ENCODE measurements at regions of chr20 and their contacts with region 1.

Region 1: DNA sequence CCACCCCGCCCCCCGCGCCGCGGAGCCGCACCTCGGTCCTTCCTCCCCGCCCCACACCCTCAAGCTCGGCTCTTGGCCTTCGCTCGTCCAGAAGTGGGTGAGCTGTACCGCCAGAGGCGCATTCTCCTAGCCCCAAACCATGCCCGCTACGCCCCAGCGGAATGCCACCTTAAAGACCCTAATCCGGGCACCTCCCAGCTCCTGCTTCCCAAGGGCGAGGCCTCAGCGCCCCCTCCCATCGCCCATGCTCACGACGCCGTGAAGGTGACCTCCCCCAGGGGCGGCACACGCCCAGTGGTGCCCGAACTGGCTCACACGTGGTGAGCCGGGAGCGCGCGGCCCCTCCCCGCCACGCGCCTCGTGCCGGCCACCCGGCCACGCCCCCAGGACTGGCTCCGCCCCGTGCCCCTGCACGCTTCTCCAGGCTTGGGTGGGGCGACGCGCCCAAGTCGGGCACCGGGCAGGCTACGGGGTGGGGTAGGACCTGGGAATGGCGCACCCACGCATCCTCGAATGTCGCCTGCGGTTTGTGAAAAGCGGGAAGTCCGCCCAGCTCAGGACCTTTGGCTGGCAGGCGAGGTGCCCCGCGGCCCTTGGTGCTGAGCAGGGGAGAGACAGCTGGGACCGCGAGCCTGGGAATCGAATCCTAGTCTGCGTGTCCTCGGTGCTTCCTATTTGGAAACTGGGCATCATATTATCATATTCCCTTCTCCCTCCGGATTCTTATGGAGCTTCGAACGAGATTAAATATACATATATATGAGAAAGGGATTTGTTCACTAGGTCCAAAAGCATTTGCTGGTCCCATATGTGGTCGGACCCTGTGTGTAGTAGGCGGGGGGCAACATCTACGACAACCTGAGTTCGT is 941 bp upstream of the SOX12 start:
- DNase-seq: peak; percentile 95
- ATAC-seq: peak; percentile 57
- H3K4me3 ChIP-seq: peak overlapping the region; percentile 58 to 95 (median 79)
- H3K4me3 Mint-ChIP-seq: peak overlapping the region; percentile 95
- H3K27ac ChIP-seq: peak overlapping the region; percentile 65 to 89
- H3K27ac Mint-ChIP-seq: peak overlapping the region; percentile 95
- H3K4me1 ChIP-seq: peaks cover 15 to 29% of the 10 kb centered on the region in 2 donors
- H3K4me1 Mint-ChIP-seq: peaks cover 26% of the 10 kb centered on the region
- H3K27me3 ChIP-seq: no peaks in the 10 kb centered on the region
- H3K27me3 Mint-ChIP-seq: no peaks in the 10 kb centered on the region
- CTCF ChIP-seq: peak; percentile 56

Region 2: DNA sequence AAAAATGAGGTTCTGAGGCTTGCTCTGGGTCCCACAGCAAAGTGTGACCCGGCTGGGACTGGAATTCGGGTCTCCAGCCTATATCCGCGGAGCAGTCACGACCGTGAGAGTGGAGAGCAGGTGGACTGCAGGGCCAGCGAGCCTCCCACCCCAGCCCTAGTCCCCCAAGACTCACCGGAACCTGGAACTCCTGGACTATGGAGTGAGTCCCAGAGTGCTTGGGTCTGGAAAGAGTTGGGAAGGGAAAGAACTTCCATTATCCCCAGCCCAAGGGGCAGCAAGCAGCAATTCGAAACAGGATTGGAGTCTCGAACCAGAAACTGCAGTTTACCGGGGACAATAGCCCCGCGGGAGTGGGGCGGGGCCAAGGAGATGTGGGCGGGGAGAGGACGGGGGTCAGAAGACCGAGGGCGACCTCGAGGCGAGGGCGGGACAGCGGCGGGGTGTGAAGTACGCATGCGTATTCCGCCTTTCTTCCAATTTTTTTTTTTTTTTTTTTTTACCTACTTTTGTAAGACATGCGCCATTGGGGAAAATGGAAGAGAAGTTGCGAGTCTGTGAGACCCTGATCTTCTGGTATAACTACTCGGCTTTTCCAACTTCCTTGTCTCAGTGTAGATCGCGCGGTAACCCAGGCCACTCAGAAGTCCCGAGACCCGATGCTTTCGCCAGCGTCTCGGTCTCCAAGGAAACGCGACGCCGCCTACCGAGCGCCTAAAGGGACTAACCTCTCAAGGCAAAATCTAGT is 34.2 kb before region 1 on chr20 and contains the start of gene C20orf96:
- CTCF ChIA-PET with region 1: interaction called, 20 read pairs
- POLR2A ChIA-PET with region 1: interaction called, 3 read pairs
- intact Hi-C with region 1: loop called (anchors 1 kb)
- DNase-seq: peak; percentile 93
- ATAC-seq: peak; percentile 98
- H3K4me3 ChIP-seq: peak within 1 kb of the TSS; percentile 48 to 83 (median 69)
- H3K4me3 Mint-ChIP-seq: no peak within 1 kb of the TSS
- H3K27ac ChIP-seq: peak within 1 kb of the TSS in 1 of 2 donors; percentile 57
- H3K27ac Mint-ChIP-seq: no peak within 1 kb of the TSS
- H3K4me1 ChIP-seq: peaks cover 18 to 22% of the 10 kb centered on the region in 2 donors
- H3K4me1 Mint-ChIP-seq: peaks cover 6% of the 10 kb centered on the region
- H3K27me3 ChIP-seq: no peaks in the 10 kb centered on the region
- H3K27me3 Mint-ChIP-seq: no peaks in the 10 kb centered on the region
- CTCF ChIP-seq: peak; percentile 45
- total RNA-seq, gene C20orf96: 7.5 TPM in 2 replicates

Region 3: GRCh38 chr20:309841-310644 is 14.4 kb before region 1 on chr20:
- CTCF ChIA-PET with region 1: interaction called, 17 read pairs
- POLR2A ChIA-PET with region 1: interaction called, 8 read pairs
- intact Hi-C with region 1: loop called (anchors 1 kb)
- DNase-seq: peak; percentile 89
- ATAC-seq: peak; percentile 100
- H3K4me3 ChIP-seq: peak overlapping the region in 4 of 5 experiments; percentile 35 to 62 (median 44)
- H3K4me3 Mint-ChIP-seq: peak overlapping the region; percentile 92
- H3K27ac ChIP-seq: peak overlapping the region in 1 of 2 donors; percentile 14
- H3K27ac Mint-ChIP-seq: peak overlapping the region; percentile 89
- H3K4me1 ChIP-seq: peaks cover 10 to 13% of the 10 kb centered on the region in 2 donors
- H3K4me1 Mint-ChIP-seq: peaks cover 16% of the 10 kb centered on the region
- H3K27me3 ChIP-seq: no peaks in the 10 kb centered on the region
- H3K27me3 Mint-ChIP-seq: no peaks in the 10 kb centered on the region
- CTCF ChIP-seq: no peak

Region 4: DNA sequence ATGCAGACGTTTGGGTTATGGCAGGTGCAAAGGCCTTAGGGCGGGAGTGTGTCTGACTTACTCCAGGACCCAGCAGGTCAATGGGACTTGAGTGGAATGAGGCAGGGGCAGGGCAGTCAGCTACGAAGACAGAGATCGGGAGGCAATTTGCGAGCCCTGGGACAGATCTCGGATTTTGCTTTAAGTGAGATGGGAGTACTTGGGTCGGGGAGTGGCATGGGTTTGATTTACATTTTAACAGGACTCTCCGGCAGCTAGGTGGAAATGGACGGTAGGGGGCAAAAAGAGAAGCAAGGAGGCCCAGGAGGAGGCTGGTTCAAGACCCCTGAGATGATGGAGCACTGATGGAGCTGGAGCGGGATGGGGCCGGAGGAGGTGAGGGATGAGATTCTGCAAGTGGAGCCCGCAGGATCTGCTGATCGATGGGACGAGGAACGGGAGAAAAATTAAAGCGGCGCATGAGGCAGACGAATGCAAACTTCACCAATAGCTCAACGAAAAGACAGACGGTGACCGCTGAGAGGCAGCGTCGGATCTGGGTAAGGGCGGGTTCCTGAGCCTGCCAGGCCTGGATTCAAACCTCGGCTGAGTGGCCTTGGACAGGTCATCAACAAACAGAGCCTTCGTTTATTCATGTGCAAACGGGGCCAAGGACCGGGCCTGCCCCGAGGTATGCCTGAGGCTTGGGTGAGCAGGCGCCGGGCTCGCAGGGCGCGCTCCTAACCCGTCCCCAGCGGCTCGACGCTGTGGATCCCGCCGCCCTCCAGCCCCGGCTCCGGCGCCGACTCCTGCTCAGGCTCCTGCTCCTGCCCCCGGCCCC is 82.9 kb after region 1 on chr20:
- CTCF ChIA-PET with region 1: no interaction called
- POLR2A ChIA-PET with region 1: no interaction called
- intact Hi-C with region 1: loop called (anchors 1 kb)
- DNase-seq: peak; percentile 81
- ATAC-seq: peak; percentile 69
- H3K4me3 ChIP-seq: peak overlapping the region; percentile 28 to 99 (median 96)
- H3K4me3 Mint-ChIP-seq: peak overlapping the region; percentile 92
- H3K27ac ChIP-seq: peak overlapping the region; percentile 18 to 64
- H3K27ac Mint-ChIP-seq: peak overlapping the region; percentile 96
- H3K4me1 ChIP-seq: peaks cover 30 to 33% of the 10 kb centered on the region in 2 donors
- H3K4me1 Mint-ChIP-seq: peaks cover 42% of the 10 kb centered on the region
- H3K27me3 ChIP-seq: no peaks in the 10 kb centered on the region
- H3K27me3 Mint-ChIP-seq: no peaks in the 10 kb centered on the region
- CTCF ChIP-seq: peak; percentile 64

Region 5: DNA sequence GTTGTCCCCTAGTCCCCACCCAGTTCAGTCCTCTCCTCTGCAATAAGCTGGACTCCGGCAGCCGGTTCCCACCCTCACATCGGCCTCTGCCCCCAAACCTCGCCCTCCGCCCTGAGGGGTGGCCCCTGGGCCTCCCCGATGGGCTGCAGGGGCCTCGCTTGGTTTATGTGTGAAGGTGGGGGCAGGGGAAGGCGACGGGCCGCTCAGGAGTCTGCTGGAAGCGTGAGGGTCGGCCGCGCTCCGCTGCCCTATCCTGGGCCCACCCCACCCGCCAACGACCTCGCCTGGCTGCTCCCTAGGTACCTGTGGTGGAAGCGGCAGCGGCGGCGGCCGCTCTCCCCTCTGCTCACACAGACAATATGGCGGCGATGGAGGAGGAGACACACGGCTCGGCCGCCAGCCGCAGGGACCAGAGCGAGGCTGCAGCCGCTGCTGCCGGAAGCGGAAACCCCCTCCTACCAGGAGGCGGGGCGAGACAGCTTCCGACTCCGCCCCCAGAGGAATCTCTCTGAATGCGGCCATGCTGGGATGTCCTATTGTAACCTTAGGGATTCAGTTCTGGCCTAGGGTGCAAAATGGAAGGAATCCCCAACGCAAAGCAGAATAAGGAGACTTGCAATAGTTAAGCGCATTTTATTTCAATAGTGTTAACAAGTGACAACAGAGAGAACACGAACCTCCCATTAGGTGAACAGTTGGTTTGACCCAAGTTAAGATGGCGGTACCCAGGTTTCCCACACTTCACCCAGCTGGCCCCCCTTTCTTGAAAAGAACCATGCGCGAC is 219.2 kb after region 1 on chr20 and contains the start of gene CSNK2A1:
- CTCF ChIA-PET with region 1: no interaction called
- POLR2A ChIA-PET with region 1: interaction called, 3 read pairs
- intact Hi-C with region 1: loop called (anchors 1 kb)
- DNase-seq: peak; percentile 99
- ATAC-seq: peak; percentile 91
- H3K4me3 ChIP-seq: peak within 1 kb of the TSS; percentile 30 to 98 (median 85)
- H3K4me3 Mint-ChIP-seq: peak within 1 kb of the TSS; percentile 95
- H3K27ac ChIP-seq: peak within 1 kb of the TSS; percentile 93 to 99
- H3K27ac Mint-ChIP-seq: peak within 1 kb of the TSS; percentile 100
- H3K4me1 ChIP-seq: peaks cover 33 to 36% of the 10 kb centered on the region in 2 donors
- H3K4me1 Mint-ChIP-seq: peaks cover 53% of the 10 kb centered on the region
- H3K27me3 ChIP-seq: peaks cover 0 to 4% (median 2%) of the 10 kb centered on the region in 4 experiments
- H3K27me3 Mint-ChIP-seq: peaks cover 4% of the 10 kb centered on the region
- CTCF ChIP-seq: no peak
- total RNA-seq, gene CSNK2A1: 125 and 135 TPM in 2 replicates